ENCODE measurements at regions of chr10 and their contacts with region 1.

Region 1: DNA sequence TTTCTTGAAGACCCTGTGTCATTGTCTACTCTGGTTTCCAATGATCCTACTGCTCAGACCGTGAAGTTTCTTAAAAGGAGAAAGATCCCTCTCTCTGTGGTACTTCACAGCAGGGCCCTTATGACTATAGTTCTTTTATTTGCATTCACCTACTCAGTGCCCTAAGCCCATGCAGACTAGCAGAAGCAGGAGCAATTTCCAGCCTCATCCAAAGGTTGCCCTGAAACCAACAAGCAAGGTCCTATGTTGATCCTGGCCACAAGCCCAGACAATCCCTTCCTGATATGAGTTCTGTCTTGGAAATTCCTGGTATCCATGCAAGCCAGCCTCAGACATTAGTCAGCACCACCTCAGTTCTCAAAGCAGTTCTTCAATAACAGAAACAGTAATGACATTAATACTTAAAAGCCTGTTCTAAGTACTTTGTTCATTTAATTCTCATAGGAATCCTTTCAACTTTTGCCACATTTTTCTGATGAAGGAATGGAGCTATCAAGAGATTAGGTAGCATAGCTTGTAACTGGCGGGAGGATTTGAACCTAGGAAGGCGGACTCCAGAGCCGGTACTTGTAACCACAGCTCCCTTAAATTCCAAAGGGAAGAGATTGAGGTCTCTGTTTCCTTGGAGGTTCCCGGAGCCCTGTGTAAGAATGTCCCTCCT is 58.1 kb upstream of the ST8SIA6 start:
- DNase-seq: peak; percentile 99
- H3K4me3 ChIP-seq: no peak overlapping the region
- H3K27ac ChIP-seq: peak overlapping the region; percentile 94
- H3K4me1 ChIP-seq: peaks cover 46% of the 10 kb centered on the region
- H3K27me3 ChIP-seq: no peaks in the 10 kb centered on the region
- CTCF ChIP-seq: no peak
- POLR2A ChIP-seq: peak; percentile 26

Region 2: GRCh38 chr10:17430647-17431355 is 81.7 kb before region 1 on chr10:
- CTCF ChIA-PET with region 1: no interaction called
- POLR2A ChIA-PET with region 1: no interaction called
- dilution Hi-C with region 1: no loop called
- intact Hi-C with region 1: loop called (anchors 2 kb)
- DNase-seq: peak; percentile 87
- H3K4me3 ChIP-seq: no peak overlapping the region
- H3K27ac ChIP-seq: no peak overlapping the region
- H3K4me1 ChIP-seq: peaks cover 22% of the 10 kb centered on the region
- H3K27me3 ChIP-seq: no peaks in the 10 kb centered on the region
- CTCF ChIP-seq: peak; percentile 84 to 90
- POLR2A ChIP-seq: no peak

Region 3: GRCh38 chr10:17454161-17455014 is 58.1 kb before region 1 on chr10 and contains the start of gene ST8SIA6:
- CTCF ChIA-PET with region 1: interaction called, 7 read pairs
- POLR2A ChIA-PET with region 1: interaction called, 7 read pairs
- dilution Hi-C with region 1: no loop called
- intact Hi-C with region 1: loop called (anchors 2 kb)
- DNase-seq: peak; percentile 66
- H3K4me3 ChIP-seq: peak within 1 kb of the TSS; percentile 37 to 69 (median 55)
- H3K27ac ChIP-seq: no peak within 1 kb of the TSS
- H3K4me1 ChIP-seq: peaks cover 9% of the 10 kb centered on the region
- H3K27me3 ChIP-seq: no peaks in the 10 kb centered on the region
- CTCF ChIP-seq: no peak
- POLR2A ChIP-seq: no peak
- total RNA-seq, gene ST8SIA6: 0.35 and 0.51 TPM in 2 replicates

Region 4: DNA sequence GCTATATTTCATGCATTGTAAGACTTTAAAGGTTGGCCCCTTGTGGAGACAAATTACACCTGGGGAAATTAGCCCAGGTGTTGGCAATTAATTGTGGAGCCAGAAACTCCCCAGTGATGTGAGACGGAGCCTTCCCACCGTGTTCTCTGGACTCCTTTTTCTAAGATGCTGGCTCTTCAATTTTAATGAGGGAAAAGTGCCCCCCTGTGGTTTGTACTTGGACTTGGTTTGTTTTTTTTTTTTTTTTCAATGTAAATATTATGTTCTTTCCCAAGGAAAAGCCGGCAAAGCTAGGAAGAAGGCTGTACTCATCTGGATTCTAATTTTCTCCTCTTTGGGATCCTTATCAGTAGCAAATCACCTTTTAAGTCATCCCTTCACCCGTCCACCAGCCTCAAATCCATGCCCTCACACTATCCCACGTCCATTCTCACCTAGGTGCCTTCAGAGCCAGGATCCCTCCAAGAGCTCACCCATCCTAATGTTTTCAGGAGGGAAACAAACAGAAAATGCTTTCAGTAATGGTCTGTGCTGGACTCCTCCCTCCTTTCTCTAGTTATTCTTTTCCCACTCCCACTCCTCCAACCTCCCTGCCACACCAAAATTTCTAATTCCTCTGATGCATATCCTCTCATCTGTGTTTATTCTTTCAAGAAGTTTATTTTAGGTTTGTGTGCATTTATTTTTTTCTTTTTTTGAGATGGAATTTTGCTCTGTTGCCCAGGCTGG is 37.7 kb before region 1 on chr10:
- CTCF ChIA-PET with region 1: interaction called, 3 read pairs
- POLR2A ChIA-PET with region 1: no interaction called
- dilution Hi-C with region 1: no loop called
- intact Hi-C with region 1: loop called (anchors 1 kb)
- DNase-seq: peak; percentile 40
- H3K4me3 ChIP-seq: no peak overlapping the region
- H3K27ac ChIP-seq: no peak overlapping the region
- H3K4me1 ChIP-seq: peaks cover 12% of the 10 kb centered on the region
- H3K27me3 ChIP-seq: no peaks in the 10 kb centered on the region
- CTCF ChIP-seq: peak in 1 of 2 donors; percentile 22
- POLR2A ChIP-seq: no peak

Region 5: DNA sequence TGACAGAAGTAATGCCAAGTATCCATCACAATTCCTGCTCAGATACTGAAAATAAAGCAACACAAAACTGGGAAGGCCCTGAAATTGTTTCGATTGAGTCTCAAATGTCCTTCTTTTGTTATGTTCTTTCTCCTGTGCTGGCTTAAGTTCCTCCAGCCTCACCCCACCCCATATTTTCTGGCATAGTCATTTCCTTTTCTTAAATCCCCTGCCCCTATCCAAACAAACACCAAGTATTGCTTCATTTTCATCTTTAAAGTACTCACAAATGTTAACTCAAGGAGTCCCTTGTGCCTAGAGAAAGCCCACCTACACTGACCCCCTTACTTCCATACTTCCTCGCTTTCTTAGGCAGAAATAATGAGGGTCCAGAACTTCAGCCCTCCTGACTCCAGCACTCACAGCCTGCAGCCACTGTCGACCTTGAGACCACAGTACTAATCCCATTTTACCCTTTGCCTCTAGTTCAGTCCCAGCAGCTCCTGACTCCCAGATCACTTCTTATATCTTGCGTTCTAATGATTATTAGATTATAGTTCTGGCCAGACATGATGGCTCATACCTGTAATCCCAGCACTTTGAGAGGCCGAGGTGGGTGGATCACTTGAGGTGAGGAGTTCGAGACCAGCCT is 15.2 kb after region 1 on chr10:
- CTCF ChIA-PET with region 1: interaction called, 4 read pairs
- POLR2A ChIA-PET with region 1: no interaction called
- dilution Hi-C with region 1: no loop called
- intact Hi-C with region 1: loop called (anchors 1 kb)
- DNase-seq: peak; percentile 87
- H3K4me3 ChIP-seq: no peak overlapping the region
- H3K27ac ChIP-seq: peak overlapping the region; percentile 98
- H3K4me1 ChIP-seq: peaks cover 23% of the 10 kb centered on the region
- H3K27me3 ChIP-seq: no peaks in the 10 kb centered on the region
- CTCF ChIP-seq: no peak
- POLR2A ChIP-seq: peak; percentile 21

Region 6: GRCh38 chr10:17578603-17579002 is 66.1 kb after region 1 on chr10:
- CTCF ChIA-PET with region 1: no interaction called
- POLR2A ChIA-PET with region 1: no interaction called
- dilution Hi-C with region 1: no loop called
- intact Hi-C with region 1: loop called (anchors 1 kb)
- DNase-seq: peak; percentile 97
- H3K4me3 ChIP-seq: no peak overlapping the region
- H3K27ac ChIP-seq: no peak overlapping the region
- H3K4me1 ChIP-seq: no peaks in the 10 kb centered on the region
- H3K27me3 ChIP-seq: no peaks in the 10 kb centered on the region
- CTCF ChIP-seq: no peak
- POLR2A ChIP-seq: peak; percentile 66

Region 7: DNA sequence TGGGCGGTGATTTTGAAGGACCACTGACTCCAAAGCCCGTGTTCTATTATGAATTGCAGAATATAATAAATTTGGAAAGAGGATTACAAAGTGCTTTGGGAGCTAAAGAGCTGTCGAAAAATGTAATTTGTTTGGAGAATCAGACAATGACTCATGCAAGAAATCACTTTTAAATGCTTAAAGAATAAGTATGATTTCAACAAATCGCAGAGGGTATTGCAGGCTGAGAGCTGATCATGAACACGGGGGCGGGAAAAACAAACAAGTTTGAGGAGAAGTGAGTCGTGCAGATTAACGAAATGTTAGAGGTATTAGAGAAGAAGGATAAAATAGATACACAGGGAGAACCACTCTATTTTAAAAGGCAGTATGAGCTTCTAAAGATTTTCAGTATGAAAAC is 109.6 kb after region 1 on chr10:
- CTCF ChIA-PET with region 1: no interaction called
- POLR2A ChIA-PET with region 1: no interaction called
- dilution Hi-C with region 1: no loop called
- intact Hi-C with region 1: no loop called
- DNase-seq: no peak
- H3K4me3 ChIP-seq: no peak overlapping the region
- H3K27ac ChIP-seq: no peak overlapping the region
- H3K4me1 ChIP-seq: no peaks in the 10 kb centered on the region
- H3K27me3 ChIP-seq: peaks cover 9 to 27% of the 10 kb centered on the region in 2 experiments
- CTCF ChIP-seq: no peak
- POLR2A ChIP-seq: no peak

Region 8: GRCh38 chr10:17742918-17743317 is 230.4 kb after region 1 on chr10:
- CTCF ChIA-PET with region 1: no interaction called
- POLR2A ChIA-PET with region 1: no interaction called
- dilution Hi-C with region 1: no loop called
- intact Hi-C with region 1: loop called (anchors 2 kb)
- DNase-seq: peak; percentile 66
- H3K4me3 ChIP-seq: no peak overlapping the region
- H3K27ac ChIP-seq: no peak overlapping the region
- H3K4me1 ChIP-seq: peaks cover 25% of the 10 kb centered on the region
- H3K27me3 ChIP-seq: no peaks in the 10 kb centered on the region
- CTCF ChIP-seq: peak; percentile 67 to 75
- POLR2A ChIP-seq: no peak